ENCODE measurements at regions of chr22 and their contacts with region 1.

Region 1: GRCh38 chr22:39319270-39320022 is at the start of gene RPL3:
- DNase-seq: peak; percentile 97

Region 2: DNA sequence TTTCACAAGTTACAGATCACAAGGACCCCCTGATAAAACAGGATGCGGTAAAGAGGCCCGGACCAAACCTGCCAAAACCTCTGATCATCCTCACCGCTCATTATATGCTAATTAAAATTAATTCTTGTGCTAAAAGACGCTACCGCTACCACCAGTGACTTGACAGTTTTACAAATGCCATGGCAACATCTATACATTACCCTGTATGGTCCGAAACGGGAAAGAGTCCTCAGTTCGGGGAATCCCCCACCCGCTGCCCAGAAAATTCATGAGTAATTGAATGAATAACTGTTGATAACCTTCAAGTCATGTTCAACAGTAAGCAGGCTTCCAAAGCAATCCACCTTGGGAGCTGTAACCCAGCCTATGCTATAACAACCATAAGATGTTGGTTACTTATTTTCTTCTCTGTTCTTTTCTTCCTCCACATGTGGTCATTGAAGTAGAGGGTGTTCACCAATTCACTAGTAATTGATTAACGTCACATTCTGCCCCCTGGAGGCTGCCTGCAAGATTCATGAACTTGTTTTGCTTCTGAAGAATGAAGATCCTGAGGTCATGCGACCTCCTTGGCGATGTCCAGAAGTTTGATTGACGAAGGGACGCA is 201.8 kb before region 1 on chr22:
- CTCF ChIA-PET with region 1: no interaction called
- POLR2A ChIA-PET with region 1: no interaction called
- DNase-seq: peak; percentile 43

Region 3: DNA sequence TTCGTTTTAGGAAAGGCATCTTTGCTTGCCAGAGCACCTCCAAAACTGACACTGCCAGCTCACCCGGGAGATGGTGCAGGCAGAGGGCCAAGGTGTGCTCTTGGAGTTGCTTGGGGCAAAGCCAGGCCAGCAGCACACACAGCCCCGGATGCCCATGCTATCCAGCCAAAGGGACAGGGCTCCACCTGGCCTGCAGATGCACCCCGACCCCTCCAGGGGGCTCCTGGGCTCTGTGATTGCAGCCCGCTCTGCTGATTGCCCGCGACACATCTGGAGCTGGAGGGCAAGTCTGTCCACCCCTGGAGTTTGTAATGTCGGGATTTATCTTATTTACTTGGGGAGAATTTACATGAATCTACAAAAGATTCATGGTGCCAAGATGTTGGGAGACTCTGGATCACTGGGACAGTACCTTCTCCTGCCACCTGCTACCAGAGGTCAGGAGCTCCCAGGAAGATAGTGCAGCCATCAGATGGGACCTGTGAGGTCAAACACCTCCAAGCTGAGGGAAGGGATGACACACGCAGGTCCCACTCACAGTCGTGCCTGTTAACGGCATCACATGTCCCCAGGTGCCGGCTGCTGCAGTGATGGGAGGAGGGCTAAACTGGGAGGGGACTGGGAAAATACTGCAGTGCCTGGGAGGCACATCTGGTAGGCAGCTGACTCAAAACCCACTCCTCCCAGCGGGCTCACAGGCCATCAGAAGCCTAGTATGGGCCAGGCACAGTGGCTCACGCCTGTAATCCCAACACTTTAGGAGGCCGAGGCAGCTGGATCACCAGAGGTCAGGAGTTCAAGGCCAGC is 184.2 kb before region 1 on chr22:
- CTCF ChIA-PET with region 1: interaction called, 3 read pairs
- POLR2A ChIA-PET with region 1: interaction called, 15 read pairs
- DNase-seq: peak; percentile 70

Region 4: DNA sequence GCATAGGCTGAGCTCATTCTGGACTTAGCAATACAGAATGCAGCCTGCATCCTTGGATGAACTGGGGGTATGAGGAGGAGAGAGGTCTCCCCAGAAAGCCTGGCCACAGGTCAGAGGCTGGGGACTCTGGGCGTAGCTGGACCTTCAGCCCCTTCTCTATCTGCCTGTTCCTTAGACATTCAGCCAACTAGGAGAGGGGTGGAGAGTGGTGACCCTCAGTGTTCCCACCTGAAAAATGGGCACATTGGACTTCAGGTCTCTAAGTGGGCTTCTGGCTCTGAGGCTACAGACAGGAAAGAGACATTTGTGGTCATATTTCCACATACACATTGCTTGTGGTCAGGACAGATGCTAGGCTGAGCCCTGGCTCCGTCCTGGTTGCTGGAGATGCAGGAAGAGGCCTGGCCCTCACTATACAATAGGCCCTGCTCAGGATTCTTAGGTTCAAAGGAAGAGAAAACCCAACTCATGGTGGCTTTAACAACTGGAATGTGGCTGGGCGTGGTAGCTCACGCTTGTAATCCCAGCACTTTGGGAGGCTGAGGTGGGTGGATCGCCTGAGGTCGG is 136.9 kb before region 1 on chr22:
- CTCF ChIA-PET with region 1: no interaction called
- POLR2A ChIA-PET with region 1: interaction called, 22 read pairs
- DNase-seq: peak; percentile 4

Region 5: DNA sequence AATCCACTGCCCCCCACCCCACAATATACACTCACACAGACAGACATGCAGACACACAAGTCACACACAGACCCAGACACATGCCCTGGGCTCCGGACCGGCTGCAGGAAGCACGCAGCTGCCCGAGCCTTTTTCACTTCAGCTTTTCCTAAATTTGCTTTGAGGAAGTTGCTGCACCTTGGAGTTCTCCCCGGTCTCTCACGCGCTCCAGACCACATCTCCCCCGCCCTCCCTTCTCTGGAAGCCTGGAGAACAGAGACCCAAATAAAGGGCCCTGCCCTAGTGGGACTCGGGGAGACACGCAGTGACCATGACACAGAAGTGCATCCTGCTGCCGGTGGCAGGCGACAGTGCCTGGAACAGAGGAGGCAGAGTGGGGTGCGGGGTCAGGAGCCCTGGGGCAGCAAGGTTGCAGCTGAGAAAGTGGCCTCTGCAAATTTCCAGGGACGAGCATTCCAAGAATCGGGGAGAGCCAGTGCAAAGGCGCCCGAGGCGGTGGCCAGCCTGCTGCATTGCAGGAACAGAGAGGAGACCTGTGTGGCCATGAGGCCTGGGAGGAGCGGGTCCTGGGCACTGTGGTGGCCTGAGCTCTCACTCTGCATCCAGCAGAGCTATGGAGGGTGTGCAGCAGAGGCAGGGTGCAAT is 19.1 kb before region 1 on chr22:
- CTCF ChIA-PET with region 1: no interaction called
- POLR2A ChIA-PET with region 1: interaction called, 13 read pairs
- DNase-seq: no peak

Region 6: GRCh38 chr22:39349506-39349966 is 30.1 kb after region 1 on chr22:
- CTCF ChIA-PET with region 1: no interaction called
- POLR2A ChIA-PET with region 1: interaction called, 142 read pairs
- DNase-seq: peak; percentile 90

Region 7: GRCh38 chr22:39462443-39463221 is 143.2 kb after region 1 on chr22:
- CTCF ChIA-PET with region 1: no interaction called
- POLR2A ChIA-PET with region 1: interaction called, 10 read pairs
- DNase-seq: no peak

Region 8: DNA sequence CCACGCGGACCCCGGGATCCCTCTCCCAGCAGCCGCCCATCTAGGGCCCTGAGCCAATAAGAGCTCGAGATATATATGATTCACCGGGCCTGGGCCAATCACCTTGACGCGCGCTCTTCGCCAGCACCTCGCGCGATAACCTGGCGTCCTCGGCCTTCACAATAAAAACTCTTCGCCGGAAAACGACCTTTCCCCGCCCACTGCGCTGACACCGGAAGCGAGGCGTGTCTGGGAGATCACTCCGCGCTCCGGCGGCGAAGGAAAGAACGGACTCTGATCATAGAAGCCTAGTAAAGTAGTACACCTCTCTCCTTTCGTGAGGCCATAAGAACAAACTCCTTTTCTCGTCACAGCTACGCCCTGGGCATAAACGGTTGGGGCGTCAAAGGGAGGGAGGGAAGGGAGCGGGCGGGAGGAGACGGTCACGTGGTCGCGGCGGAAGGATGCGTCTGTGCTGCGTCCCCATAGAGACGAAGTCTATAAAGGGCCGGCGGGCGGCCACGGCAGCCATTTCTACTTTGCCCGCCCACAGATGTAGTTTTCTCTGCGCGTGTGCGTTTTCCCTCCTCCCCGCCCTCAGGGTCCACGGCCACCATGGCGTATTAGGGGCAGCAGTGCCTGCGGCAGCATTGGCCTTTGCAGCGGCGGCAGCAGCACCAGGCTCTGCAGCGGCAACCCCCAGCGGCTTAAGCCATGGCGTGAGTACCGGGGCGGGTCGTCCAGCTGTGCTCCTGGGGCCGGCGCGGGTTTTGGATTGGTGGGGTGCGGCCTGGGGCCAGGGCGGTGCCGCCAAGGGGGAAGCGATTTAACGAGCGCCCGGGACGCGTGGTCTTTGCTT is 200.8 kb after region 1 on chr22 and contains the start of gene ATF4:
- CTCF ChIA-PET with region 1: no interaction called
- POLR2A ChIA-PET with region 1: interaction called, 24 read pairs
- DNase-seq: peak; percentile 96